Natural killer cell (primary cell): ENCODE measurements at regions of chr11 and their contacts with region 1.

Region 1: GRCh38 chr11:17504330-17505107 is 27.9 kb upstream of the ABCC8 start:
- DNase-seq: peak; percentile 61 to 82
- ATAC-seq: peak; percentile 55 to 85 (median 79)
- H3K4me3 ChIP-seq: no peak overlapping the region
- H3K4me3 Mint-ChIP-seq: no peak overlapping the region
- H3K27ac ChIP-seq: no peak overlapping the region
- H3K27ac Mint-ChIP-seq: no peak overlapping the region
- H3K4me1 ChIP-seq: no peaks in the 10 kb centered on the region
- H3K4me1 Mint-ChIP-seq: no peaks in the 10 kb centered on the region
- H3K27me3 ChIP-seq: no peaks in the 10 kb centered on the region
- H3K27me3 Mint-ChIP-seq: no peaks in the 10 kb centered on the region
- CTCF ChIP-seq: peak; percentile 69

Region 2: DNA sequence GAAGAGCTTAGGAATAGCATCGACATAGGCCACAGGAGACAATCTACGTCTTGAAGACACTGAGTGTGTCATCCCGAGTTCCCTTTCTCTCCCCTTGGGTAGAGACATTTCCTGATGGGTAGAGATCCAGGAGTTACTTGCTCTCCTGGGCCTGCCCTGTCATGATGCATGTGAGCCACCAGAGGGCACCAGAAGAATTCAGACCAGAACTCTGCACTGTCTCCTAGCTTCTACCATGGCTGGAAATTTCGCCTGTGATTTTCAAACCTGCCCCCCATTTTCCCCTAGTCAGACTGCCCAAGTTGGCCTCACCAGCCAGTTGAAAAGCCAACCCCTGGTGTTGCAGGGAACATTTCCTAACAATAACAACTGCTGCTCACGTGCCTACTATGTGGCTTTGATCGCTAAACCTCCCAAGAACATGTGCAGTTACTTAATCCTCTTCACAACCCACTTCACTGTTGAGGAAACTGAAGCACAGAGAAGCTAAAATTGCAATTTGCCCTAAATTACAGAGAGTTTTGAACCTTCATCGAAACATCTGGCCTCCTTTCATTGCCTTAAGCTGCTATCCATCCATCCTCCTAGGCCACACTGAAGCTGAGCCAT is 718.9 kb before region 1 on chr11:
- intact Hi-C with region 1: loop called (anchors 1 kb)
- DNase-seq: peak; percentile 26 to 72
- ATAC-seq: peak; percentile 76 to 86 (median 84)
- H3K4me3 ChIP-seq: no peak overlapping the region
- H3K4me3 Mint-ChIP-seq: no peak overlapping the region
- H3K27ac ChIP-seq: no peak overlapping the region
- H3K27ac Mint-ChIP-seq: no peak overlapping the region
- H3K4me1 ChIP-seq: peaks cover 2% of the 10 kb centered on the region
- H3K4me1 Mint-ChIP-seq: no peaks in the 10 kb centered on the region
- H3K27me3 ChIP-seq: no peaks in the 10 kb centered on the region
- H3K27me3 Mint-ChIP-seq: no peaks in the 10 kb centered on the region
- CTCF ChIP-seq: peak; percentile 87

Region 3: DNA sequence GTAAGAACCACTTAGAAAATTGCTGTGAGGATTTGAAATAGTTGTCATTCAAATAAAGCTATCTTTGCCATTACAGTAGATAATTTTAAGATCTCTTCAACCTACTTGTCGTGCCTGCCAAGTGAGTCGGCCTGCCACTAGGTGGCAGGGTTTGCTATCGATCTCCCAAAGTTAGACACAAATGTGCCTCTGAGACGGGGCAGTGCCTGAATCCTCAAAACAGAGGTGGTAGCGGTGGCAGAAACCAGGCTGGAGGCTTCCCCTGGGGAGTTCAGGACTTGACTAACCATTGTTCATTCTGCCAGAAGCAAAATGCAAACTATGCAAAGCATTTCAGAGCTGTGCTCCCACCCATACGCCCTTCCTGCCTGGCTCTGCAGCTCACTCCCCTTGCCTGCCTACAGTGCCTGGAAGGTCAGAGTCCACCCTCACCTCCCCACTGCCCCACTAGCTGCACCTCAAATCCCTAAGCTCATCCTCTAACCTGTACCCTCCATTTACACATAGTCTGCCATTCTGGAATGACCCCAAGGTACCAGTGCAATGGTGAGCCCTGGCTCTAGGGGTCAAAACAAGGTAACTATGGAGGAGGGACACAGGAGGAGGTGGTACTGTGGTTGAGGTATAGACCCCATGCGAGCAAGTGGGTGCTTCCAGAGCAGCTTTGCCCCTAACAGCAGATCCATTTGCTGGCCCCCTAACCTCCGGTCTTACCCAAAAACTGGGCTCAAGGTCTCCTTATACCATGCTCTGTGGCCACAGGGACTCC is 684.0 kb before region 1 on chr11:
- intact Hi-C with region 1: loop called (anchors 1 kb)
- DNase-seq: peak in 1 of 2 donors; percentile 66
- ATAC-seq: peak; percentile 61 to 76 (median 65)
- H3K4me3 ChIP-seq: no peak overlapping the region
- H3K4me3 Mint-ChIP-seq: no peak overlapping the region
- H3K27ac ChIP-seq: no peak overlapping the region
- H3K27ac Mint-ChIP-seq: no peak overlapping the region
- H3K4me1 ChIP-seq: peaks cover 8% of the 10 kb centered on the region
- H3K4me1 Mint-ChIP-seq: peaks cover 0 to 6% of the 10 kb centered on the region in 2 donors
- H3K27me3 ChIP-seq: no peaks in the 10 kb centered on the region
- H3K27me3 Mint-ChIP-seq: no peaks in the 10 kb centered on the region
- CTCF ChIP-seq: peak; percentile 80

Region 4: DNA sequence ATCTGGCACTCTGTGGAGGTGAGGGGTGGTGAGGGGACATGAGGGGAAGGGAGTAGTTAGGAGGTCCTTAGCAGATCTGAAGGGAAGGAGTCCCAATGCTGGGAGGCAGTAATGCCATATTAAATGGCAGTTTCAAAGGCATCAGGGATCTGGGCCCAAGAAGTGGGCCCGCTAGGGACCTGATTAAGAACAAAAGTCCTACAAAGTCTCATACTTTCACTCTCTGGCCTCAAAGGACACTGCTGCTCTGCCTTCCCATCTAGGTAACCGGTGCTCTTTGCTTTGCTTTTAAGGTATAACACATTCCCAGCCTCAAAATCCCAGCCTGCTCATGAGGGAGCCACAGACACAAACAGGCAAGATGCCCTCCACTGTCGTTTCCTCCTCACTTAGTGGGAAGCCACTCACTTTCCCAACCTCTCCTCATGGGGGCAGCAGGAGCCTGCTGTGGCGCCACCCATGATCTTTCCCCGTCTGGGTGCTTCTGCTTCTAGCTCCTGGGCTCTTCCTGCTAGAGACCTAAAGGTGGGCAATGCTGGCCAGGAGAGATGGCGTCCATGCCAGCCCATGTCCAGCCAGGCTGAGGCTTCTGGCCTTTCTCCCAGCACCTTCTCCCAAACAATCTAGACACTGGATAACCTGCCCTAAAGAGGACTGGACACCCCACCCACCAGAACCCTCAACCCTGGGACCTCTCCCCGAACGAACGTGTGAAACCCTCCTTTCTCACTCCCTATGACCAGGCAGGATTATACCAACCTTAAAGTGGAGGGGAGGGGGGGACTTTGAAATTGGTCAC is 558.6 kb before region 1 on chr11:
- intact Hi-C with region 1: loop called (anchors 10 kb)
- DNase-seq: peak in 1 of 2 donors; percentile 58
- ATAC-seq: peak in 2 of 3 donors; percentile 54 to 66
- H3K4me3 ChIP-seq: no peak overlapping the region
- H3K4me3 Mint-ChIP-seq: no peak overlapping the region
- H3K27ac ChIP-seq: no peak overlapping the region
- H3K27ac Mint-ChIP-seq: no peak overlapping the region
- H3K4me1 ChIP-seq: no peaks in the 10 kb centered on the region
- H3K4me1 Mint-ChIP-seq: no peaks in the 10 kb centered on the region
- H3K27me3 ChIP-seq: no peaks in the 10 kb centered on the region
- H3K27me3 Mint-ChIP-seq: no peaks in the 10 kb centered on the region
- CTCF ChIP-seq: peak; percentile 17

Region 5: DNA sequence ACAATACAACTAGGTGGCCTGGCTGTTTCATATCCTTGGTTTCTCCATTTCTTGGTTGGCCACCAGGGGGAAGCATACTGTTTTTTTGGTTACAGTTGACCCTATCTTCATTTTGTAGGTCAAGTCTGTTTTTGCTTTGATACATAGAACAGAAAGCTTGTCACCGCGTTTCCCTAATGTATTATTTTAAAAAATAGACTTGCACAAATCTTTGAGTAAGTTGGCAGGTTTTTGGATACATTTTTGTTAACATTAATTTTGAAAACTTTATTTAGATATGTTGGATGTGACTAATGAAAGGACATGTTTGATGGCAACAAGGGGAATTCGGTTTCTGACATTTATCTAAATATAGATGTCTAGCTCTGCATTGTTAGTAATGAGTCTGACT is 149.9 kb before region 1 on chr11:
- intact Hi-C with region 1: loop called (anchors 1 kb)
- DNase-seq: peak; percentile 32 to 82
- ATAC-seq: peak; percentile 28 to 54 (median 30)
- H3K4me3 ChIP-seq: no peak overlapping the region
- H3K4me3 Mint-ChIP-seq: peak overlapping the region; percentile 93
- H3K27ac ChIP-seq: no peak overlapping the region
- H3K27ac Mint-ChIP-seq: peak overlapping the region; percentile 88
- H3K4me1 ChIP-seq: peaks cover 20% of the 10 kb centered on the region
- H3K4me1 Mint-ChIP-seq: peaks cover 36 to 38% of the 10 kb centered on the region in 2 donors
- H3K27me3 ChIP-seq: no peaks in the 10 kb centered on the region
- H3K27me3 Mint-ChIP-seq: no peaks in the 10 kb centered on the region
- CTCF ChIP-seq: peak; percentile 80

Region 6: DNA sequence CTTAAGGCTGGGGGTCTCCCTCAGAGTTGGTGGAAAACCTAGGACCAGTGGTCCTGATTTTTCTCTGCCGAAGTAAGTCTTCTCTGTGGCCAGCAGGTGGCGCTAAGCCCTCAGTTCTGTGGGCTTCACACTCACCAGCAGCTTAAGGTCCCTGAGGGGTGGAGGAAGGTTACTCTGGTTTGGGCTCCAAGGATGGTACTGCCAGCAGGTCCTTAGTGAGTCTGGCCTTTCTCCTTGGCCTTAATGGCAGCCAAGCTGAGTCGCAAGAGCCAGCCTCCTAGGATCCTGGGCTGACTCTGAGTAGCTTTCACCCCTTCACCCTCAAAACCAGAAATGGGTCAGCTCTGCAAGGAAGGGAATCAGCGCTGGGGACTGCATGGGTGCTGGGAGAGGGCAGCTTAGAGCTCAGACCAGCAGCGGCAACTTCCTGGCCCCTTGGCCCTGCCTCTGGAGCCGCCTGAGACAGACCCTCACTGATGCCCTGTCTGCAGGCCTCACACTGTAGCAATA is 120.5 kb before region 1 on chr11:
- intact Hi-C with region 1: loop called (anchors 1 kb)
- DNase-seq: peak; percentile 72 to 92
- ATAC-seq: peak; percentile 64 to 79 (median 77)
- H3K4me3 ChIP-seq: no peak overlapping the region
- H3K4me3 Mint-ChIP-seq: no peak overlapping the region
- H3K27ac ChIP-seq: no peak overlapping the region
- H3K27ac Mint-ChIP-seq: no peak overlapping the region
- H3K4me1 ChIP-seq: peaks cover 5% of the 10 kb centered on the region
- H3K4me1 Mint-ChIP-seq: peaks cover 9 to 11% of the 10 kb centered on the region in 2 donors
- H3K27me3 ChIP-seq: no peaks in the 10 kb centered on the region
- H3K27me3 Mint-ChIP-seq: no peaks in the 10 kb centered on the region
- CTCF ChIP-seq: peak; percentile 97

Region 7: GRCh38 chr11:17403982-17404759 is 100.3 kb before region 1 on chr11:
- intact Hi-C with region 1: no loop called
- DNase-seq: no peak
- ATAC-seq: no peak
- H3K4me3 ChIP-seq: no peak overlapping the region
- H3K4me3 Mint-ChIP-seq: no peak overlapping the region
- H3K27ac ChIP-seq: no peak overlapping the region
- H3K27ac Mint-ChIP-seq: no peak overlapping the region
- H3K4me1 ChIP-seq: peaks cover 6% of the 10 kb centered on the region
- H3K4me1 Mint-ChIP-seq: no peaks in the 10 kb centered on the region
- H3K27me3 ChIP-seq: no peaks in the 10 kb centered on the region
- H3K27me3 Mint-ChIP-seq: peaks cover 0 to 3% of the 10 kb centered on the region in 2 donors
- CTCF ChIP-seq: no peak